Naive thymus-derived CD4-positive, alpha-beta T cell (primary cell): ENCODE measurements at regions of chr21 and their contacts with region 1.

Region 1: DNA sequence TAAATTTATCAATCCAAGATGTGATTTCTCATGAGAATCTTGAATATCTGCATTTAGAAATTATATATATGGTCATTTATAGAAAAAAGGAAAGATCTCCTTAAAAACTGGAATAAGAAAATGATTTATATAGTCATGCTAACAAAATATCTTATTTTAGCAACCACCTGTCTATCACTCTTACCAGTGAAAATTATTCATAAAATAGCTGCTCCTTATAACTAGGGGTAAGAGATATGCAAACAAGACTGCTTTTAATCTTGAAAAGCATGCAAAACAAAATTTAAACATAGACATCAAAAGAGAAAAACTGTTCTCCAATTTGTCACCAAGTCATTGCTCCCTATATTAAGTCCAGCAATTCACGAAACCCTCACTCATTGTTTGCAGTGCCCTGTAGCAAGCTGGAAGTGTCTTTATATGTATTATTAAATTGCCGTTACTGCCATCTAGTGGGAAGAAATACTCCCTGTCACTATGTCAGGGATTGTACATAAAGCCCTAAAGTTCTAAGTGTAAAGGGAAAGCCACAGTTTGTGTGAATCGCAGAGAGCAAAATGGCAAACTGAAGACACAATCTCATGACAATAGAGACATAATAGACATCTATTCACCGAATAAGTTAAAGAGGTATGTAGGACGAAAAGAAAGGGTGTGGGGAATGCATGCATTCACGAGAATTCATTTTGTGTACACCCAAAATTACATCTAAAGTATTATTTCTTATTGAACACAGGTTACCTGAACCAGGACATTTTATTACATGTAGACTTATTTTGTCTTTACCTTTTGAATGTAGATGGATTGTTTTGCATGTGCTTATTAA is 600.5 kb downstream of the USP25 start:
- DNase-seq: peak in 5 of 9 donors; percentile 29 to 49 (median 34)
- ATAC-seq: peak; percentile 68
- H3K4me3 ChIP-seq: no peak overlapping the region
- H3K4me3 Mint-ChIP-seq: no peak overlapping the region
- H3K27ac ChIP-seq: no peak overlapping the region
- H3K27ac Mint-ChIP-seq: no peak overlapping the region
- H3K4me1 ChIP-seq: no peaks in the 10 kb centered on the region
- H3K4me1 Mint-ChIP-seq: peaks cover 0 to 2% (median 0%) of the 10 kb centered on the region in 7 donors
- H3K27me3 ChIP-seq: no peaks in the 10 kb centered on the region
- H3K27me3 Mint-ChIP-seq: no peaks in the 10 kb centered on the region

Region 2: GRCh38 chr21:15894596-15894995 is 435.7 kb before region 1 on chr21:
- CTCF ChIA-PET with region 1: no interaction called
- POLR2A ChIA-PET with region 1: no interaction called
- intact Hi-C with region 1: loop called in 1 of 2 experiments (anchors 10 kb)
- DNase-seq: no peak
- ATAC-seq: no peak
- H3K4me3 ChIP-seq: no peak overlapping the region
- H3K4me3 Mint-ChIP-seq: no peak overlapping the region
- H3K27ac ChIP-seq: no peak overlapping the region
- H3K27ac Mint-ChIP-seq: no peak overlapping the region
- H3K4me1 ChIP-seq: no peaks in the 10 kb centered on the region
- H3K4me1 Mint-ChIP-seq: peaks cover 0 to 5% (median 0%) of the 10 kb centered on the region in 7 donors
- H3K27me3 ChIP-seq: no peaks in the 10 kb centered on the region
- H3K27me3 Mint-ChIP-seq: peaks cover 0 to 16% (median 12%) of the 10 kb centered on the region in 5 donors

Region 3: GRCh38 chr21:16002874-16003466 is 327.3 kb before region 1 on chr21:
- CTCF ChIA-PET with region 1: no interaction called
- POLR2A ChIA-PET with region 1: no interaction called
- intact Hi-C with region 1: loop called in 1 of 2 experiments (anchors 1 kb)
- DNase-seq: no peak
- ATAC-seq: no peak
- H3K4me3 ChIP-seq: no peak overlapping the region
- H3K4me3 Mint-ChIP-seq: no peak overlapping the region
- H3K27ac ChIP-seq: no peak overlapping the region
- H3K27ac Mint-ChIP-seq: no peak overlapping the region
- H3K4me1 ChIP-seq: no peaks in the 10 kb centered on the region
- H3K4me1 Mint-ChIP-seq: no peaks in the 10 kb centered on the region
- H3K27me3 ChIP-seq: no peaks in the 10 kb centered on the region
- H3K27me3 Mint-ChIP-seq: peaks cover 0 to 13% (median 0%) of the 10 kb centered on the region in 5 donors

Region 4: DNA sequence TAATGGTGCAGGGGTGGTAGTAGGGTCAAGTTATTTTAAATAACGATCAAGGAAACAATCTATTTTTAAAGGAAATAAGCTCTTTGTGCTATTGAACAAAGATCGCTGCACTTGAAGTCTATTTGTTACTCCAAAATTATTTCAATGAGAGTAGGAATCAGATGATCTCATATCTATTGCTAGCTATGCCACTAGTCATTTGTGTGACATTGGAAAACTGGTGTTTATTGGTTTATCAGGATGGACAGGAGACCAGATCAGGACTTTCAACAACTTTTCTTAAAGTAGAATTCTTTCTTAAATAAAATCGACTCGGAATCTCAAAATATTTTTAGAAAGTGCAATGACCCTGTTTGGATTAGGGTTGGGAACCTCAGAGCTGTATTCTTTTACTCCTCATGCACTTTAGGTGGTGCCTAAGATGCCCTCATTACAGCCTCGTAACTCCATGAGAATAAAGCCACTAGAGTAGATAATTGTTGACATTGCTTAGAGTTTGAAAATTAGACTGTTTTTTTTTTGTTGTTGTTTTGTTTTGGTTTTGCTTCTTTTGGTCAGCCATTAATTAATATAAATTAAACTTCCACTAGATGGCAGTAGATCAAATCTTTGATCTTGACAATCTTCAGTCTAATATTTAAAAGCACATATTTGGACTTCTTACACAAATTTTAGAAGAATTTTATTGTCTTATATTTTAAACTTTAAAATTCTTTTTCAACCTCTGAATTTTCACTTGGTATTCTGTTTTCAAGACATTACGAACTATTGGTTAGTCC is 248.1 kb before region 1 on chr21:
- CTCF ChIA-PET with region 1: interaction called, 3 read pairs
- POLR2A ChIA-PET with region 1: no interaction called
- intact Hi-C with region 1: loop called (anchors 1 to 2 kb)
- DNase-seq: no peak
- ATAC-seq: no peak
- H3K4me3 ChIP-seq: no peak overlapping the region
- H3K4me3 Mint-ChIP-seq: no peak overlapping the region
- H3K27ac ChIP-seq: no peak overlapping the region
- H3K27ac Mint-ChIP-seq: no peak overlapping the region
- H3K4me1 ChIP-seq: no peaks in the 10 kb centered on the region
- H3K4me1 Mint-ChIP-seq: no peaks in the 10 kb centered on the region
- H3K27me3 ChIP-seq: no peaks in the 10 kb centered on the region
- H3K27me3 Mint-ChIP-seq: no peaks in the 10 kb centered on the region

Region 5: GRCh38 chr21:16194095-16194787 is 136.1 kb before region 1 on chr21:
- CTCF ChIA-PET with region 1: no interaction called
- POLR2A ChIA-PET with region 1: no interaction called
- intact Hi-C with region 1: loop called in 1 of 2 experiments (anchors 1 kb)
- DNase-seq: peak in 6 of 9 donors; percentile 5 to 35 (median 22)
- ATAC-seq: peak; percentile 65
- H3K4me3 ChIP-seq: no peak overlapping the region
- H3K4me3 Mint-ChIP-seq: peak overlapping the region in 9 of 10 donors; percentile 39 to 77 (median 70)
- H3K27ac ChIP-seq: peak overlapping the region; percentile 20
- H3K27ac Mint-ChIP-seq: peak overlapping the region in 5 of 9 donors; percentile 11 to 71 (median 62)
- H3K4me1 ChIP-seq: no peaks in the 10 kb centered on the region
- H3K4me1 Mint-ChIP-seq: peaks cover 3 to 40% (median 23%) of the 10 kb centered on the region in 7 donors
- H3K27me3 ChIP-seq: no peaks in the 10 kb centered on the region
- H3K27me3 Mint-ChIP-seq: peaks cover 0 to 25% (median 5%) of the 10 kb centered on the region in 5 donors

Region 6: GRCh38 chr21:16353764-16354163 is 23.5 kb after region 1 on chr21:
- CTCF ChIA-PET with region 1: no interaction called
- POLR2A ChIA-PET with region 1: no interaction called
- intact Hi-C with region 1: no loop called
- DNase-seq: no peak
- ATAC-seq: no peak
- H3K4me3 ChIP-seq: no peak overlapping the region
- H3K4me3 Mint-ChIP-seq: no peak overlapping the region
- H3K27ac ChIP-seq: no peak overlapping the region
- H3K27ac Mint-ChIP-seq: no peak overlapping the region
- H3K4me1 ChIP-seq: no peaks in the 10 kb centered on the region
- H3K4me1 Mint-ChIP-seq: no peaks in the 10 kb centered on the region
- H3K27me3 ChIP-seq: no peaks in the 10 kb centered on the region
- H3K27me3 Mint-ChIP-seq: peaks cover 0 to 4% (median 0%) of the 10 kb centered on the region in 5 donors